ENCODE measurements at regions of chr20 and their contacts with region 1.

Region 1: DNA sequence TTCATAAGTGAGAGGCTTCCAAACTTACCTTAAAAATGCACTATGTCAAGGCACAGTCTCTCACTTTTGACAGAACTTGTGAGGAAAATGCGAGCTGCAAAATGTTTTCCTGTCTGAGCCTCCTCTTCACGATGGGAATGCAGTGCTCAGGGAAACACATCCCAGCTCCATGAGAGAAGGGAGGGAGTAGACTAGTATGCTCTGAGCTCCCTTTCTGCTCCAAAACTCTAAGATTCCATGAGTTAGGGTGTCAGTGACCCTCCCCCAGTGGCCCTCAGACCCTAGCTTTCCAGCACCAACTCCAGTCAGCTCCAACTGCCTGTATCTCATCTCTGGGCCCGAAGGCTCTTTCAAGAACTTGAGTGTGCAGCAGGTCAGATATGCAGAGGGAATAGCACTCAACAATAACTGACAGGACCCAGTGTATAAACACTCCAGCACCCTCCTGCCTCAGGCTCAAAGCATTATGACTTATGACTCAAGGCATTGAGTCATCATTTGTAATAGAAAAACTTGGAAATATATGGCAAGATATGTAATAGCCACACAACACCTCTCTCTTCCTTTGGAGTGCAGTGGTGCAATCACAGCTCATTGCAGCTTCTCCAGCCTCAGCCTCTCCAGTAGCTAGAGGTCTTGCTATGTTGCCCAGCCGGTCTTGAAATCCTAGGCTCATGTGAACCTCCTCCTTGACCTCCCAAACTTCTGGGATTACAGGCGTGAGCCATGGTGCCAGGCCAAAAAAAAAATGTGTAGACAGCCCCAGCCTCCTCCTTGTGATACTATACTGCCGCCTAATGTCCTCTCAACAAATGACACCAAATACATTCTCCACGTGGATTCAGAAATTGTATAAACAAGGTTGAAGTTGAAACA is 16.7 kb upstream of the ENTPD6 start:
- DNase-seq: peak; percentile 20
- H3K4me3 Mint-ChIP-seq: no peak overlapping the region
- H3K27ac Mint-ChIP-seq: no peak overlapping the region
- H3K4me1 Mint-ChIP-seq: no peaks in the 10 kb centered on the region
- H3K27me3 Mint-ChIP-seq: peaks cover 5% of the 10 kb centered on the region

Region 2: GRCh38 chr20:25000268-25000821 is 178.5 kb before region 1 on chr20:
- CTCF ChIA-PET with region 1: interaction called, 18 read pairs
- POLR2A ChIA-PET with region 1: no interaction called
- intact Hi-C with region 1: loop called (anchors 1 kb)
- DNase-seq: no peak
- H3K4me3 Mint-ChIP-seq: no peak overlapping the region
- H3K27ac Mint-ChIP-seq: peak overlapping the region; percentile 47
- H3K4me1 Mint-ChIP-seq: peaks cover 5% of the 10 kb centered on the region
- H3K27me3 Mint-ChIP-seq: no peaks in the 10 kb centered on the region

Region 3: DNA sequence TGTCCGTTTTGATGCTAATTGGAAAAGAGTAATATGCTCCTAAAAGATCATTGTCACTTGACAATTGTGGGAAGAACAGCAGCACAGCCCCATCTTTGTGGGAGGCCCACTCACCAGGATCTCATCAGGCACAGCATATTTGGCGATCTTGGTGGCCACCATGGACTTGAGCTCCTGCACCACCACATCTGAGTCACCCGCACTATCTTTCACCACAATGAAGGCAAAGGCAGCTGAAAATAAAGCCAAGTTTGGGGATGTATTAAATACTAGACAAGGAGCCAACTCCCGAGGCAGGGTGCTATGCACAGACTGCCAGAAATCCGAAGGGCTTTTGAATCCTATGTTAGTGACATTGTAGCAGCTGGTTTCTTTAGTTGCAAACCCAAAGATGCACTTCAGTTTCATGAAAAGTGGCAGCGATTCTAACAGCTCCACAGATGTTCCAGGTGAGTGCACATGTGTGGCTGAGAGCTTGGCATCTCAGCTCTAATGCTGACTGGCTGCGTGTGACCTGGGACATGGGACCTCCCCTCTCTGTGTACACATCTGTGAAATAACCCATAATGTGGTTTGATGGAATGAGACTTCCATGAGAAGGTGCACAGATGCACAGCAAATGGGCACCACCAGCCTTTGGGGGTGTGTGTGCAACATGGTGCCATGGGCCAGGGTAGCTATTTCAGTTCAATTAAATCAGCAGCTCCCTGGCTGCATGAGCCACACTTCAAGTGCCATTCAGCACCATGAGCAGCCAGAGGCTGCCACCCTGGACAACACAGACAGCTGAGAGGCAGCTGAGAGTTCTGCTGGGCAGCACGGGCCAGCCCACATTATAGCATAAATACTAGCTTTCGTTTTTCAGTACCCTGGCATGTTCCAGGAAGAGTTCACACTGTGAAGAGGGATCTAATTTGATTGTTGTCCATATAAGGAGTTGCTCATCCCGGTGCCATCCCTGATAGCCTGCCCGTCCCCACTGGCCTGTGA is 169.3 kb before region 1 on chr20:
- CTCF ChIA-PET with region 1: interaction called, 5 read pairs
- POLR2A ChIA-PET with region 1: no interaction called
- intact Hi-C with region 1: loop called (anchors 5 kb)
- DNase-seq: no peak
- H3K4me3 Mint-ChIP-seq: no peak overlapping the region
- H3K27ac Mint-ChIP-seq: no peak overlapping the region
- H3K4me1 Mint-ChIP-seq: no peaks in the 10 kb centered on the region
- H3K27me3 Mint-ChIP-seq: no peaks in the 10 kb centered on the region

Region 4: GRCh38 chr20:25065625-25066338 is 113.0 kb before region 1 on chr20:
- CTCF ChIA-PET with region 1: interaction called, 11 read pairs
- POLR2A ChIA-PET with region 1: no interaction called
- intact Hi-C with region 1: loop called (anchors 1 kb)
- DNase-seq: peak; percentile 75
- H3K4me3 Mint-ChIP-seq: no peak overlapping the region
- H3K27ac Mint-ChIP-seq: no peak overlapping the region
- H3K4me1 Mint-ChIP-seq: peaks cover 2% of the 10 kb centered on the region
- H3K27me3 Mint-ChIP-seq: peaks cover 13% of the 10 kb centered on the region

Region 5: DNA sequence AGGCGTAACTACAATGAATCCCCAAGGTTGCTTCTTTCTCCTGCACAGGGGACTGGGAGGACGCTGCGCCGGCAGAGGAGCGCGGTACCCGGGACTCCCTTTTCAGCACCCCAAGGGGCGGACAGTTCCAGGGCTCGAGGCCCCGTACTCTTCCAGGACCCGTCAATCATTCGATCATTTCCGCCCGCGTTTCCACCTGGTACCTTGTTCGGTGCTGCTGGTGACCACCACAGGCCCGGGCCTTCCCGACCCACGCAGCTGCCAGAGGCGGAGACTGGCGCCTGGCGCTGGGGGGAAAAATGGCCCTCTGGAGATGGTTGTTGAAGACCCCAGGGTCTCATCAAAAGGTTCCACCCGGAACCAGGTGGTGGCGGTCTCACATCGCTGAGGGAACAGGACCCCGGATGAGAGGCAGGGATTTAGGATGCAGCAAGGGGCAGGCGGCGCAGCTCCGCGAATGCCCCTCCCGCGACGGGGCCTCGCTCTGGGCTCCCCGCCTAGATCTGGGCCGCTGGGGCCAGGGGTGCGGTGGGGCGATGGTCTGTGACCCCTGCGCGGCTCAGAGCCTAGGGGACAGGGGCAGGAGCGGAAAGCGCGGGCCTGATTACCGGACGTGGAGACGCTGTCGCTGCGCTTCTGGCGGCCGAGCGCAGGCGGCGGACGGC is 97.6 kb before region 1 on chr20:
- CTCF ChIA-PET with region 1: interaction called, 5 read pairs
- POLR2A ChIA-PET with region 1: no interaction called
- intact Hi-C with region 1: loop called (anchors 5 kb)
- DNase-seq: peak; percentile 56
- H3K4me3 Mint-ChIP-seq: no peak overlapping the region
- H3K27ac Mint-ChIP-seq: no peak overlapping the region
- H3K4me1 Mint-ChIP-seq: peaks cover 32% of the 10 kb centered on the region
- H3K27me3 Mint-ChIP-seq: peaks cover 71% of the 10 kb centered on the region

Region 6: GRCh38 chr20:25090492-25091429 is 88.0 kb before region 1 on chr20:
- CTCF ChIA-PET with region 1: interaction called, 10 read pairs
- POLR2A ChIA-PET with region 1: no interaction called
- intact Hi-C with region 1: no loop called
- DNase-seq: peak; percentile 84
- H3K4me3 Mint-ChIP-seq: peak overlapping the region; percentile 20
- H3K27ac Mint-ChIP-seq: peak overlapping the region; percentile 31
- H3K4me1 Mint-ChIP-seq: peaks cover 26% of the 10 kb centered on the region
- H3K27me3 Mint-ChIP-seq: peaks cover 5% of the 10 kb centered on the region

Region 7: DNA sequence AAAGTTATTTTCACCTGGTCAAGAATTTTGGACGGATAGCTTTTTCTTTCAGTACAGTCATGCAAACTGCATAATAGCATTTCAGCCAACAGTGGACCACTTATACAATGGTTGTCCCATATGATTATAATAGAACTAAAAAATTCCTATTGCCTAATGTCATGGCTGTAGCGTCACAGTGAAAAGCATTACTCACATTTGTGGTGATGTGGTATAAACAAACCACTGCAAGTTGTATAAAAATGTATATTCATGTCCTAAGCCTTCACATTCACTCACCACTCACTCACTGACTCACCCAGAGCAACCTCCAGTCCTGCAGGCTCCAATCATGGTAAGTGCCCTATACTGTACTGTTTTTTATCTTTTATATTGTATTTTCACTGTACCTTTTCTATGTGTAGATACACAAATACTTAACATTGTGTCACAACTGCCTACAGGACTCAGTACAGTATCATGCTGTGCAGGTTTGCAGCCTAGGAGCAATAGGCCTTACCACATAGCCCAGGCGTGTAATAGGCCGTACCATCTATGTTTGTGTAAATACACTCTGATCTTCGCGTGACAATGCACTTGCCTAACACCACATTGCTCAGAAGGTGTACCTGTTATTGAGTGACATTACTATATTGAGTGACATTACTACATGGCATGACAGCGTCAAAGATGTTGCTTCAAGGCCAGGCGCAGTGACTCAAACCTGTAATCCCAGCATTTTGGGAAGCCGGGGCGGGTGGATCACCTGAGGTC is 194.0 kb after region 1 on chr20:
- CTCF ChIA-PET with region 1: no interaction called
- POLR2A ChIA-PET with region 1: no interaction called
- intact Hi-C with region 1: no loop called
- DNase-seq: peak; percentile 34
- H3K4me3 Mint-ChIP-seq: no peak overlapping the region
- H3K27ac Mint-ChIP-seq: no peak overlapping the region
- H3K4me1 Mint-ChIP-seq: peaks cover 18% of the 10 kb centered on the region
- H3K27me3 Mint-ChIP-seq: no peaks in the 10 kb centered on the region

Region 8: DNA sequence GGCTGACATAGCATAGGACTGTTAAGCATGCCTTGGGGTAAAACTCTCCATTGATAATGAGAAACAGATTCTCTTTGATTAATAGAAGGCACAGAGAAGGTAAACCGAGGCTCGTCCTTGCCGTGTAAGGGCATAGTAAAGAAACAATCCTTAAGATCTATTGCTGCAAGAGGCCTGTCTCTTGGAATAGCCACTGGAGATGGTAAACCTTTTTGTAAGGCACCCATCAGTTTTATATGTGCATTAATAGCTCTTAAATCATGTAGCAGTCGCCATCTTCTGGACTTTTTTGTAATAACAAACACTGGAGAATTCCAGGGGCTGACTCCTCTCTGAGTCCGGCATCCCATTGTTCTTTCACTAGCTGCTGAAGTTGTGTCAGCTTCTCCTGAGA is 220.2 kb after region 1 on chr20:
- CTCF ChIA-PET with region 1: interaction called, 13 read pairs
- POLR2A ChIA-PET with region 1: no interaction called
- intact Hi-C with region 1: no loop called
- DNase-seq: peak; percentile 23
- H3K4me3 Mint-ChIP-seq: no peak overlapping the region
- H3K27ac Mint-ChIP-seq: no peak overlapping the region
- H3K4me1 Mint-ChIP-seq: no peaks in the 10 kb centered on the region
- H3K27me3 Mint-ChIP-seq: no peaks in the 10 kb centered on the region

Measured in activated CD4-positive, alpha-beta memory T cell treated with anti-CD3 and anti-CD28 coated beads for 36 hours (primary cell).